ENCODE measurements at regions of chr9 and their contacts with region 1.

Region 1: DNA sequence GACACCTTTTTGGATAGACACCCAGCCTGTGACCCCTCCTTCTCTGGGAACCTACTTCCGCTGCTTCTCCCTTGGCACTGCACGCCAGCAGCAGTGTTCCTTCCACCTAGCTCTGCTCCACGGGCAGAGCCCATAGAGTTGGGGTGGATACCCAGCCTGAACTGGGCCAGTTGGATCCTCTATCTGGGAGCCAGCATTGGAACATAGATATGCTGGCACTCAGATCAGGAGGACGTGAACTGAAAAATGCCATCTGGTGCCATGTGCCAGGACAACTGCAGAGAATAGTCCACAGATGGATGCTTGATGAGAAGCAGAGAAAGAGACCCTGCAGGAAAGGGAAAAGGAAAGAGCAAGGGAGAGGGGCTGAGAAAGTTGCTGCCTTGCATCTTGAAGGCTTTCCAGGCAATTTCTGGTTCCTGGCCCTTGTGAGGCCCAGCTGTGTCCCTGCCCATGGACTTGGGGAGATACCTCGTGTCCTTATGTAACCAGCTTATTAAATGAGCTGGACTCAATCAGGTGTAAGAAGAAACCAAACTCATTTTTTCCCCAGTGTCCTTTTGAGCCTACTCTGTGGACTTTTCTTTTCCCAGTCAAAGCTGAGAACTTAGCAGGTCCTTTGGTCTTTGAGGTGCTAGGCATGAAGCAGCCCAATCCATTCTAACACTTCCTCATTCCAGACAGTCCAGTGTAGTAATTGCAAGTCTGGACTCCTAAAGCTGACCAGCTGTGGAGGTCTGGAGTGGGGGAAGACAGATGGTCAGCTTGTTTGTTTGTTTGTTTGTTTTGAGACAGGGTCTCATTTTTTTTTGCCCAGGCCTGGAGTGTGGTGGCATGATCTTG is 39.1 kb downstream of the ANGPTL2 start:
- DNase-seq: no peak
- H3K4me3 Mint-ChIP-seq: no peak overlapping the region
- H3K27ac Mint-ChIP-seq: no peak overlapping the region
- H3K4me1 Mint-ChIP-seq: peaks cover 19% of the 10 kb centered on the region
- H3K27me3 Mint-ChIP-seq: no peaks in the 10 kb centered on the region

Region 2: GRCh38 chr9:126947529-126947928 is 135.8 kb before region 1 on chr9:
- CTCF ChIA-PET with region 1: no interaction called
- POLR2A ChIA-PET with region 1: no interaction called
- DNase-seq: peak; percentile 31
- H3K4me3 Mint-ChIP-seq: no peak overlapping the region
- H3K27ac Mint-ChIP-seq: no peak overlapping the region
- H3K4me1 Mint-ChIP-seq: no peaks in the 10 kb centered on the region
- H3K27me3 Mint-ChIP-seq: peaks cover 16% of the 10 kb centered on the region

Region 3: DNA sequence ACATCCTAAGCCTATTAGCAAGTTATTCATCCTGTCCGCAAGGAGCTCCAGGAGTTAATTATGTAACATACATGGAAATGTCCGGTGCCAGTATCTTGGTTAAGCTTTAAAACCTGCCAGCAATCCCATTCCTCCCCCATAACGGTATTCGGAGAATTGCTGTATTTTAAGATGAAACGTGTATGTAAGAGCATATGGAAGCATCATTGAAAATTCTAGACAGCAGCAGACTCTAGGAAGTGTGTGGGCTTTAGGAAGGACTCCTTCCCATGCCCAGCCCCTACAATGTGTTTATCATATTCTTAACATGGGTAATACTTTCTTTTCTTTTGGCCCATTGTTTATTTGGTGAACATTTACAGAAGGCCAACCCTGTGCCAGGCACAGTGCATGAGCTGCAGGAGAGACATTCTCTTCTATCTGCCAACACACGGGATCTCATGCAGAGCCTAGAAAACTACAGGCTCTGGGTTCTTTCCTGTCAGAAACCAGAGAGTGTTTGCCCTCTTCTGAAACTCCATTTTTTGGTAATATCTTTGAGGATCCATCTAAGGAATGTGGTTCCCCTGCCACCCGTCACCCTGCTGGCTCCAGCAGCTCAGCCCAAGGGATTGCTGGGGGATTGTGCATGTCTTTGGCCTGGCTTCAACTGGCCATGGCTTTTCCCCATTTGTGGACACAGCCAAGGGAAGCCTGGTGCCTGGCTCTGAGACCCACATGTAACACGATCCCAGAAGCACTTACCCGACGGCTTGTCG is 24.0 kb after region 1 on chr9:
- CTCF ChIA-PET with region 1: interaction called, 14 read pairs
- POLR2A ChIA-PET with region 1: no interaction called
- DNase-seq: no peak
- H3K4me3 Mint-ChIP-seq: no peak overlapping the region
- H3K27ac Mint-ChIP-seq: no peak overlapping the region
- H3K4me1 Mint-ChIP-seq: no peaks in the 10 kb centered on the region
- H3K27me3 Mint-ChIP-seq: peaks cover 10% of the 10 kb centered on the region